ENCODE measurements at regions of chr1 and their contacts with region 1.

Region 1: GRCh38 chr1:230568008-230568407 is 74.3 kb upstream of the COG2 start:
- DNase-seq: no peak
- ATAC-seq: no peak

Region 2: GRCh38 chr1:229819091-229819490 is 748.9 kb before region 1 on chr1:
- intact Hi-C with region 1: no loop called
- DNase-seq: no peak
- ATAC-seq: no peak

Region 3: DNA sequence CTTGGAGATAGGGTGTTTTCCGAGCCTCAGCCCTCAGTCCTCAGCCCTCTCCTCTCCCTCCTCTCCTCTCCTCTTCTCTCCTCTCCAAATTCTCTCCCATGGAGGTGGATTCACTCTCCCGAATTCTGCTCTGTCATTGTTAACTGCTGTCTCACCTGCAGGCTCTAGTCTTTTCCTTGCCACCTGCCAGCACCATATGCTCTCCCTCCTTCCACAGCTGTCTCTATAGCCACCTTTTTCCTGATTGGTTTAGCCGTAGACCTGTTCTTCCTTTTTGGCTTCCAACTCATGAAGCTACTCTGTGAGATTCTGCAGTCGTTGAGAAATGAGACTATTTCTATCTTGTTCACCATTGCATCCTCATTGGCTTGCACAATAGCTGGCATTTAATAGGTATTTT is 94.0 kb after region 1 on chr1:
- intact Hi-C with region 1: no loop called
- DNase-seq: no peak
- ATAC-seq: no peak

Region 4: GRCh38 chr1:232486454-232487207 is 1918.6 kb after region 1 on chr1:
- intact Hi-C with region 1: loop called (anchors 10 kb)
- DNase-seq: no peak
- ATAC-seq: no peak

Measured in sciatic nerve (tissue), 2 donors.